Colonic mucosa (tissue), 4 donors: ENCODE measurements at regions of chr12 and their contacts with region 1.

Region 1: DNA sequence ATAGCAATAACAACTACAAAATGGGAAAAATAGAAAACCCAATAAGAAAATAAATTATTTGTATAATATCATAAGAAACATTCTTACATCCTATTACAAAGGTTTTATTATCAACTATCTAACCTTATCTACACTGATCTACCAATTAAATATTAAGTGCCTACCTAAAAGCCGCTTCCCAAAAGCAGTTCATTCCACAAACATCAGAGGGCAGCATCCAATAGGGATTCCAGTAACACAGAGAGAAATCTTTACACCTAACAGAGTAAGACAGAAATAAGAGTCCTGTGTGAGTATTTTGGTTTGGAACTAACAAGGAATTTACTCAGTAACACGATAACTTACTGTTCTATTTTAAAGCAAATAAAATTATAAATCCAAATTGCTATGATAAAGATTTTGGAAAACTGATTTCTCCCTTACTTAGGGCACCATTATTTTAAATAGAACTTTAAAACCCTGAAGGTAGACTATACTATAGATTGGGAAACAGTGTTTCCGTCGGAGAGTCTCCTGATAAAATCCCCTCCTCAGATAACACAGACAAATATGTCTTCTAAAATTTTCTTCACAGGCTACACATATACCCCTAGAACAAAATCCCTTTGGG is 15.0 kb downstream of the GXYLT1 start:
- DNase-seq: peak; percentile 28
- H3K4me3 ChIP-seq: no peak overlapping the region
- H3K27ac ChIP-seq: no peak overlapping the region
- H3K4me1 ChIP-seq: no peaks in the 10 kb centered on the region
- H3K27me3 ChIP-seq: no peaks in the 10 kb centered on the region
- CTCF ChIP-seq: peak; percentile 70

Region 2: GRCh38 chr12:42332301-42333285 is 202.9 kb after region 1 on chr12:
- intact Hi-C with region 1: loop called (anchors 5 kb)
- DNase-seq: peak; percentile 30
- H3K4me3 ChIP-seq: no peak overlapping the region
- H3K27ac ChIP-seq: no peak overlapping the region
- H3K4me1 ChIP-seq: peaks cover 2% of the 10 kb centered on the region
- H3K27me3 ChIP-seq: no peaks in the 10 kb centered on the region
- CTCF ChIP-seq: peak; percentile 62